ENCODE measurements at regions of chr15 and their contacts with region 1.

Region 1: GRCh38 chr15:59271595-59272201 is 65.1 kb downstream of the LDHAL6B start:
- DNase-seq: no peak
- ATAC-seq: no peak
- H3K4me3 ChIP-seq: no peak overlapping the region
- H3K27ac ChIP-seq: no peak overlapping the region
- H3K4me1 ChIP-seq: peaks cover 0 to 16% (median 0%) of the 10 kb centered on the region in 12 donors
- H3K27me3 ChIP-seq: no peaks in the 10 kb centered on the region
- CTCF ChIP-seq: no peak
- POLR2A ChIP-seq: no peak

Region 2: GRCh38 chr15:58889363-58889762 is 382.3 kb before region 1 on chr15:
- intact Hi-C with region 1: no loop called
- DNase-seq: no peak
- ATAC-seq: no peak
- H3K4me3 ChIP-seq: no peak overlapping the region
- H3K27ac ChIP-seq: no peak overlapping the region
- H3K4me1 ChIP-seq: peaks cover 0 to 5% (median 0%) of the 10 kb centered on the region in 12 donors
- H3K27me3 ChIP-seq: no peaks in the 10 kb centered on the region
- CTCF ChIP-seq: no peak
- POLR2A ChIP-seq: no peak

Region 3: GRCh38 chr15:59013246-59013873 is 258.3 kb before region 1 on chr15:
- intact Hi-C with region 1: no loop called
- DNase-seq: no peak
- ATAC-seq: no peak
- H3K4me3 ChIP-seq: no peak overlapping the region
- H3K27ac ChIP-seq: no peak overlapping the region
- H3K4me1 ChIP-seq: peaks cover 0 to 15% (median 1%) of the 10 kb centered on the region in 12 donors
- H3K27me3 ChIP-seq: no peaks in the 10 kb centered on the region
- CTCF ChIP-seq: no peak
- POLR2A ChIP-seq: no peak

Region 4: GRCh38 chr15:59313641-59314332 is 42.1 kb after region 1 on chr15:
- intact Hi-C with region 1: loop called in 1 of 10 experiments (anchors 2 kb)
- DNase-seq: peak; percentile 54 to 82 (median 77)
- ATAC-seq: peak; percentile 66 to 88 (median 80)
- H3K4me3 ChIP-seq: no peak overlapping the region
- H3K27ac ChIP-seq: peak overlapping the region in 5 of 12 donors; percentile 4 to 39 (median 21)
- H3K4me1 ChIP-seq: peaks cover 0 to 53% (median 30%) of the 10 kb centered on the region in 12 donors
- H3K27me3 ChIP-seq: no peaks in the 10 kb centered on the region
- CTCF ChIP-seq: no peak
- POLR2A ChIP-seq: no peak